Activated CD4-positive, alpha-beta T cell treated with anti-CD3 and anti-CD28 coated beads for 36 hours (primary cell): ENCODE measurements at regions of chr13 and their contacts with region 1.

Region 1: DNA sequence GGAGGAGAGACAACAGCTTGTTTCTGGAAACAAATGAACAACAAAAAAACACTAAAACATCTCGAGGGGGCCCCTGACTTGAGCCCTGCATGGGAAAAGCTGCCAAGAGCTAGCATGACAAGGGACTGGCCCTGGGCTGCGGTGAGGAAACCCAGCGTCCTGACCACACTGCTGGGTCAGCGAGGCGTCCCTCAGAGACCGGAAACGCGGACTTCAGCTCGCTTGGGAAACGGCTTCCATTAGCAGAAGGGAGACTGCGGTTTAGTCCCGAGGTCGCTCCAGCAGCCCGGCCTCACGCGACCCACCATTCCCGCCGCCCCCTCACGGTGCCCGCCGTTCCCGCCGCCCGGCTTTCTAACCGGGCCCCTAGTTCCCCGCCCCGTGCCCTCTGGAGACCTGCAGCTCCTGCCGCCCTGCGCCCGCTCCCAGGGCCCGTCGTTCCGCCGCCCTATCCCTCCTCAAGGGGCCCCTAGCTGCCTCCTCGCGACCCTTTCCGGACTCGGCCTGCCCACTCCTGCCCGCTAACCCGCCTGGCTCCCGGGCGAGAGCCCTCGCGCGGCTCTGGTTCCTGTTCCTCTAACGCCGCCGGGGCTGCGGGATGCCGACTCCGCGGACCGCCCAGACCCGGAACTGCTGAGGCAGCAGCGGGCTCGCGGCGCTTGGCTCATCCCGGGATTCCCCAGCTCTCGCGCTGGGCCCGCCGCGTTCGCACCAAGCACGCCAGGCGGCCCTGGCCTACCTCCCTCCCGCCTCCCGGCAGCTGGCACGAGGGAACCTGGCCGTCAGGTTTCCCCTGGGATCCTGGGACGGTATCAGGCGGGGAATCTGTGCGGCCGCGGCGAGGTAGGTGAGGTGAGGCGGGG is at the start of gene CCDC122:
- DNase-seq: peak; percentile 89
- ATAC-seq: peak; percentile 94
- H3K4me3 Mint-ChIP-seq: peak within 1 kb of the TSS; percentile 79
- H3K27ac Mint-ChIP-seq: peak within 1 kb of the TSS; percentile 82
- H3K4me1 Mint-ChIP-seq: peaks cover 22% of the 10 kb centered on the region
- H3K27me3 Mint-ChIP-seq: peaks cover 13% of the 10 kb centered on the region
- total RNA-seq, gene CCDC122: 2.0 to 3.1 TPM

Region 2: DNA sequence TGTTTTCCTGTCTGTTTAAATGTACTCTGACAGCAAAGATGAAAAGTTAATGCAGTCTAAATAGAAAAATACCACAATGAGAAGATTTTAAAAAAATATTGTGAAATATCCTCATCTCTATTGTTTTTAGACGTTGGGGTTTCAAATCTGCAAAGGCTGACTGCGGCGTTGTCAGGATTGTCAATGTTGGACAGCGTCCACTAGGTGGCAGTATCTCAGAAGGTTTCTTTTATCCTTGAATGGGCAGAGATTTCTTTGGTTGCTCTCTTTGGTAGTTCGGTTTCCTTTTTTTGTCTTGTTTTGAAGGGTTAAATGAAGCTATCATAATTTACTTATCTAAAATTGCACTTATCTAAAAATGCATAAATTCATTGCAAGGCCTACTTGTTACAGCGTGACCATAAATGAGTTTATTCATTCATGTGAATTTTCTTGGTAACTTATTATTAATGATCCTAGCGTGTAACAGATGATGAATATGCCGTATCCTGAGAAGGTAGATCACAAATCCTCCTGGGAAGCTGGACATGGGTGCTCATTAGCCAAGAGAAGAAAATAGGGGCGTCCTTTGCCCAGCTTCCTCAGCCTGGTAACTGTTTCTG is 1284.1 kb before region 1 on chr13:
- CTCF ChIA-PET with region 1: no interaction called
- POLR2A ChIA-PET with region 1: no interaction called
- intact Hi-C with region 1: loop called (anchors 10 kb)
- DNase-seq: peak; percentile 71
- ATAC-seq: peak; percentile 61
- H3K4me3 Mint-ChIP-seq: no peak overlapping the region
- H3K27ac Mint-ChIP-seq: no peak overlapping the region
- H3K4me1 Mint-ChIP-seq: peaks cover under 1% of the 10 kb centered on the region
- H3K27me3 Mint-ChIP-seq: no peaks in the 10 kb centered on the region

Region 3: DNA sequence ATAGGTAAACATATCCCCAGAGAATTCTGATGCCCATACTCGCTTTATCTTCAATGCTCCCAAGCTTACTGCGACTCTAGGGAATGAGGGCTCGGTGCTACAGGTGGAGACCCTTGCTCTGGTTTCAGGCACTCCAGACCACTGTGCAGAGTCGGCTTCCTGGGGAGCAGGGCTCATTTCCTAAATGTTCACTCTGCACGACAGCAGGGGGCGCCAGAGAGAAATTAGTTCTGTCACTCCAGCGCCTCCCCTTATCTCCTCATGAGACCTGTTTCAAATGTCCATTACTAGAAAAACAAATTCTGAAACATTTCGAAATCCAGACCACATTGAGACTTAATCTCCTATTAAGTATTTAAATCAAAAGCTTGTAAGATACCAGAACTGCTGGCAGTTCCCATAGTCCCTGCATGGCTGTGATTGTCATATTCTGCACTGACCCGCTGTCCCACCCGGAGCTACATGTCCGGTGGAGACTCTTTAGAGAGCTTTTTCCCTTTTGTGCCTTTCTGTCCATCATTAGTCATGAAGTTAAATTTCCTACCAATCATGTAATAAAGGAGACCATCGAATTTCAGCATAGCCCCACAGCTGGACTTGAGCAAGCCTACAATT is 909.5 kb before region 1 on chr13:
- CTCF ChIA-PET with region 1: no interaction called
- POLR2A ChIA-PET with region 1: no interaction called
- intact Hi-C with region 1: loop called (anchors 2 kb)
- DNase-seq: peak; percentile 90
- ATAC-seq: peak; percentile 79
- H3K4me3 Mint-ChIP-seq: no peak overlapping the region
- H3K27ac Mint-ChIP-seq: no peak overlapping the region
- H3K4me1 Mint-ChIP-seq: peaks cover 30% of the 10 kb centered on the region
- H3K27me3 Mint-ChIP-seq: no peaks in the 10 kb centered on the region

Region 4: DNA sequence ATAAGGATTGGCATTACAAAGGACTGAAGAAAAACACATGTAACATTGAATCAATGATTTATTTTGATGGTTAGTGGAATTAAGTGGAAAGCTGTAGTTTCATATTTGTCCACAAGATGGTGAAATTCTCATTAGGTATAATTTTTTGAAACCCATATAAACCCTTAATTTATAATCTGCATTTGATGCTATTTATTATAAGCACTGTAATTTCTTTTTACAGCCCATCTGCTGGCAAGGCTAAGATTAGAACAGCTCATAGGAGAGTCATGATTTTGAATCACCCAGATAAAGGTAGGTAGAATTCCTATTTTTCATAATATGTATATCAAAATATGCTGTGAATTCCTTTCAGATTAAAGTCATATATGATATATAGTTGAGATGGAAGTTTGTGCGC is 793.6 kb before region 1 on chr13:
- CTCF ChIA-PET with region 1: no interaction called
- POLR2A ChIA-PET with region 1: no interaction called
- intact Hi-C with region 1: loop called (anchors 5 to 10 kb)
- DNase-seq: no peak
- ATAC-seq: no peak
- H3K4me3 Mint-ChIP-seq: no peak overlapping the region
- H3K27ac Mint-ChIP-seq: no peak overlapping the region
- H3K4me1 Mint-ChIP-seq: peaks cover 16% of the 10 kb centered on the region
- H3K27me3 Mint-ChIP-seq: no peaks in the 10 kb centered on the region

Region 5: GRCh38 chr13:43303033-43303729 is 575.9 kb before region 1 on chr13:
- CTCF ChIA-PET with region 1: no interaction called
- POLR2A ChIA-PET with region 1: no interaction called
- intact Hi-C with region 1: loop called in 1 of 2 experiments (anchors 10 kb)
- DNase-seq: peak; percentile 39
- ATAC-seq: no peak
- H3K4me3 Mint-ChIP-seq: no peak overlapping the region
- H3K27ac Mint-ChIP-seq: no peak overlapping the region
- H3K4me1 Mint-ChIP-seq: no peaks in the 10 kb centered on the region
- H3K27me3 Mint-ChIP-seq: peaks cover 14% of the 10 kb centered on the region

Region 6: GRCh38 chr13:43776501-43777079 is 102.5 kb before region 1 on chr13:
- CTCF ChIA-PET with region 1: no interaction called
- POLR2A ChIA-PET with region 1: no interaction called
- intact Hi-C with region 1: no loop called
- DNase-seq: no peak
- ATAC-seq: no peak
- H3K4me3 Mint-ChIP-seq: no peak overlapping the region
- H3K27ac Mint-ChIP-seq: no peak overlapping the region
- H3K4me1 Mint-ChIP-seq: no peaks in the 10 kb centered on the region
- H3K27me3 Mint-ChIP-seq: peaks cover 20% of the 10 kb centered on the region

Region 7: DNA sequence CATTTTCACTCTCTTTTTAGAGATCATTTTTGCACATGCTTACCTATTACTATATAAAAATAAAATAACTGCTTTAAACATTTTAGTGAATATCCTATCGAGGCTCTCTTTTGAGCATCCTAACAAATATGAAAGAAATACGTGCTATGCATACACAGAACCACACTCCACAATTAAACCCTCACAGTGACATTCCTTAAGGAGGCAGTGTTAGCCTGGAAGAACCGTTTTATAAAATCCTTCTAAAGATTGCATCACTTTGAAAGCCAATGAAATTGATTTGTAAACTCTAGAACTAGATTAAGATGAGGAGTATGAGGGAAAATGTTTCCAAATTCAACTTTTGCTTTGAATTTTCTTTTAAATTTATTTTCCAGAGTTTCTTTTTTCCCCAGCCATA is 81.3 kb before region 1 on chr13:
- CTCF ChIA-PET with region 1: no interaction called
- POLR2A ChIA-PET with region 1: no interaction called
- intact Hi-C with region 1: loop called (anchors 5 kb)
- DNase-seq: no peak
- ATAC-seq: no peak
- H3K4me3 Mint-ChIP-seq: no peak overlapping the region
- H3K27ac Mint-ChIP-seq: no peak overlapping the region
- H3K4me1 Mint-ChIP-seq: peaks cover 34% of the 10 kb centered on the region
- H3K27me3 Mint-ChIP-seq: peaks cover 31% of the 10 kb centered on the region

Region 8: DNA sequence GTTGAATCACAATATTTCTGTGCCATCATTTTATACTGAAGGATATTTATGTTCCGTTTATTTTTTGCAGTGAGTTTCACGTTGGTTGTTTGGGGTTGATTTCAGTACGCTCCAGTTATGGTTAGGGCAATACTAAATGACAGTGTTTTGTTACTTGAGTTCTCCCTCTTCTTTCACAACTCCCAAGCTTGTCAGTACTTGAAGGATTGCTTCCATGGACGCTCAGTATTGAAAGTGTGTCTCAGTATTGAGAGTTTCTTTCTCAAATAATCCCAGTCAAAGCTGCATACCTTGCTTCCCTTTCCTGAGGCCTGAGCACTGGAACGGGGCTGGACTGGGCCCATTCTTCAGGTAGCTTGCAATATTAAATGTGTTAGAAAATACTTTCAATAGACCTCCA is 39.5 kb after region 1 on chr13:
- CTCF ChIA-PET with region 1: no interaction called
- POLR2A ChIA-PET with region 1: no interaction called
- intact Hi-C with region 1: no loop called
- DNase-seq: no peak
- ATAC-seq: no peak
- H3K4me3 Mint-ChIP-seq: no peak overlapping the region
- H3K27ac Mint-ChIP-seq: no peak overlapping the region
- H3K4me1 Mint-ChIP-seq: no peaks in the 10 kb centered on the region
- H3K27me3 Mint-ChIP-seq: peaks cover 5% of the 10 kb centered on the region